Right cardiac atrium (tissue), 5 donors: ENCODE measurements at regions of chr13 and their contacts with region 1.

Region 1: GRCh38 chr13:97018029-97018831 is 24.0 kb upstream of the OXGR1 start:
- DNase-seq: no peak
- ATAC-seq: peak; percentile 52 to 65
- H3K4me3 ChIP-seq: no peak overlapping the region
- H3K27ac ChIP-seq: no peak overlapping the region
- H3K4me1 ChIP-seq: no peaks in the 10 kb centered on the region
- H3K27me3 ChIP-seq: no peaks in the 10 kb centered on the region

Region 2: DNA sequence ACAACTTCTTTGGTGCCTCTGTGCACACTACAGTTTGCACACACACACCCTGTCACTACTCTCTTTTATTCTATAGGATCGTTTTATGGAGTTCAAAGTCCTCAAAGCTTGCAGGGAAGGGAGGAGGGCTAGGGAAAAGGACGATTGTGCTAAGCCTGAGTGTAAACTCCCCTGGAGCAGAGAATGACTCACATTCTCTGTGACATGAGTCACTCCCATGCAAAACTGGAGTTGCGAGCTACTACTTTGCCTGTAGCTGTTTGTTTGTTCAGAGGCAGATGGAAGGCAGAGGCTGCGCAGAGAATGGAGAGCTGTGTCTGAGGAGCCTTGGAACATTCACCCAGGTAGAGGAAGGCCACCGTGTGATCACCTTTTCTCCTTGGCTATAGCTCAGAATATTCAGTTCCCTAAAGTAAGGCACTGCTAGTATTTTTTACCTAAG is 123.4 kb after region 1 on chr13:
- intact Hi-C with region 1: no loop called
- DNase-seq: peak in 1 of 3 donors; percentile 13
- ATAC-seq: peak; percentile 92 to 96
- H3K4me3 ChIP-seq: peak overlapping the region; percentile 30
- H3K27ac ChIP-seq: no peak overlapping the region
- H3K4me1 ChIP-seq: peaks cover 3% of the 10 kb centered on the region
- H3K27me3 ChIP-seq: no peaks in the 10 kb centered on the region

Region 3: GRCh38 chr13:97802213-97802612 is 784.0 kb after region 1 on chr13:
- intact Hi-C with region 1: loop called in 1 of 4 experiments (anchors 5 kb)
- DNase-seq: no peak
- ATAC-seq: no peak
- H3K4me3 ChIP-seq: no peak overlapping the region
- H3K27ac ChIP-seq: no peak overlapping the region
- H3K4me1 ChIP-seq: no peaks in the 10 kb centered on the region
- H3K27me3 ChIP-seq: no peaks in the 10 kb centered on the region

Region 4: GRCh38 chr13:97810152-97810551 is 791.9 kb after region 1 on chr13:
- intact Hi-C with region 1: loop called in 1 of 4 experiments (anchors 10 kb)
- DNase-seq: no peak
- ATAC-seq: no peak
- H3K4me3 ChIP-seq: no peak overlapping the region
- H3K27ac ChIP-seq: no peak overlapping the region
- H3K4me1 ChIP-seq: no peaks in the 10 kb centered on the region
- H3K27me3 ChIP-seq: no peaks in the 10 kb centered on the region